Left lung (tissue), 14 donors: ENCODE measurements at regions of chr15 and their contacts with region 1.

Region 1: DNA sequence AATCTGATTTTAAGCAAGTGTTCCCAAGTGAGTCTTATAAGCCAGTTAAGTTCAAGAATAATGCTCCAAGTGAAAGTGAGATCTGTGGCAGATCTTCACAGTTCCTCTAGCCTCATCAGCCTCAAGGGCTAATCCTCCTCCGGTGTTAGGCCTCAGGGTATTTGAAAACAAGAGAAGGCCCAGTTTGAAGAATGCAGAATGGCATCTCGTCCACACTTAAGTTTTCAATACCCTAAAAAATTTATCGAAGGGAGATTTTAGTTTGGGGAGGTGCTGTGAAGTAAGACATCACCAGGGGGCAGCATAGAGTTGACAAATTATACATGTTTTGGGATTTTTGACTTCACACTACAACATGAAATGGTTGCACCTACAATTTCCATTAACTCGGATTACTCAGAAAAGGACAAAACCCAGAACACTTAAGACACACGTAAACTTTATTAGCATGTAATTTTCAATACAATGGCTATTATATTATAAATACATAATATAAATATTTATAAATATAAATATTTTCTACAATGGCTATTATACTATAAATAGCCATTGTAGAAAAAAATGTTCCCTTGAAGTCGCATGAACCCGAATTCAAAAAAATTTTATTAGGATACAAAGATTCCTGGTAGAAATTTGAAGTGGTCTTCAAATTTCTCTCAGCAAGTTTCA is 2.3 kb upstream of the TMEM266 start:
- DNase-seq: peak in 2 of 4 donors; percentile 42 to 61
- ATAC-seq: peak; percentile 75
- H3K4me3 ChIP-seq: no peak overlapping the region
- H3K27ac ChIP-seq: no peak overlapping the region
- H3K4me1 ChIP-seq: peaks cover 0 to 29% of the 10 kb centered on the region in 2 donors
- H3K27me3 ChIP-seq: peaks cover 18 to 67% of the 10 kb centered on the region in 2 donors
- CTCF ChIP-seq: peak; percentile 65 to 70

Region 2: GRCh38 chr15:76139368-76140073 is 82.1 kb after region 1 on chr15:
- intact Hi-C with region 1: loop called in 1 of 2 experiments (anchors 5 kb)
- DNase-seq: peak in 3 of 4 donors; percentile 48 to 73 (median 54)
- ATAC-seq: peak; percentile 96
- H3K4me3 ChIP-seq: no peak overlapping the region
- H3K27ac ChIP-seq: no peak overlapping the region
- H3K4me1 ChIP-seq: peaks cover 3 to 15% of the 10 kb centered on the region in 2 donors
- H3K27me3 ChIP-seq: no peaks in the 10 kb centered on the region
- CTCF ChIP-seq: peak; percentile 88 to 95

Region 3: DNA sequence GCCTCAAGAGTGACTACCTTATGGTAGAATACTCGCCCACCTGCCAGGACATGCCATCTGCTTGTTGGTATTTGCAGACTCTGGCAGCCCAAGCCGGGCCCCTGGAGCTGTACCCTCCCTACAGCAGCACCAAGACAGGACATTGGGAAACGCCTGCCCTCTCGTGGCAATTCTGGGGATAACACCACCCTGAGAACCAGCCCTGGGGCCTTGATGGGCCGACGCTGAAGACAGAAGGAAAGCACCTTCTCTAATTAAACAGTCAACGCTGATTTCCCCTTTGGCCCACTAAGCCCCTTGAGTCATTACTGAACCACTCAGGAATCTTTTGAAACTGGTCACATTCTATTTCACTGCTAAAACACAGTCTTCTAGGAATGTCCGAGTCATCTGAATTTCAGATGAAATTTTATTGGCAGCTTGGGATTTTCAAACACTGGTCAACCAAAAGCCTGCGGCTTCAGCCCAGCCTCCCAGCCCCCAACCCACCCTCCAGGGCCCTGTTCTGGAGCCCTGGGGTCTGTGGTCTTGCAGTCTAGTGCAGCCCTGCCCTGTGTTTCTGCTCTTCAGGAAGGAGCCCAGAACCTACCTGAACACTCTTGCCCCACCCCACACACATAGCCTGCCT is 93.6 kb after region 1 on chr15:
- intact Hi-C with region 1: loop called in 1 of 2 experiments (anchors 5 kb)
- DNase-seq: peak in 3 of 4 donors; percentile 53 to 73 (median 61)
- ATAC-seq: peak; percentile 92
- H3K4me3 ChIP-seq: no peak overlapping the region
- H3K27ac ChIP-seq: no peak overlapping the region
- H3K4me1 ChIP-seq: peaks cover 0 to 19% of the 10 kb centered on the region in 2 donors
- H3K27me3 ChIP-seq: peaks cover 0 to 11% of the 10 kb centered on the region in 2 donors
- CTCF ChIP-seq: peak; percentile 76 to 87